ENCODE measurements at regions of chr20 and their contacts with region 1.

Region 1: DNA sequence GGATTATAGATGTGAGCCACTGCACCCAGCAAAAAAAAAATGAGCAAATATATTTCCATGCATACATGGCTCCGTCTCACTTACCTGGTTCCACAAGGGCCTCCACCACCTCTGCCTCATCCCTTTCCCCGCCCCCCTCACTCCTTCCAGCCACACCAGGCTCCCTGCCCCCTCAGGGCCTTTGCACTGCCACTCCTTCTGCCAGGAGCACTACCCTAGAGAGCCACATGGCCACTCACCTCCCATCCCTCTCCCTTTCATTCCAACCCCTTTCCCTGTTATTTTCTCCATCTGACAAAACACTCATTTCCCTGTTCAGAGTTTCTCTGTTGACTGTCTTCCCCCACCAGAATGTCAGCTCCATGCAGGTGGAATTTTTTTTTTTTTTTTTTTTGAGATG is 12.8 kb downstream of the SNAI1 start:
- DNase-seq: no peak
- H3K4me3 ChIP-seq: no peak overlapping the region
- H3K27ac ChIP-seq: no peak overlapping the region
- H3K27me3 ChIP-seq: no peaks in the 10 kb centered on the region
- CTCF ChIP-seq: no peak

Region 2: GRCh38 chr20:49424536-49424935 is 571.0 kb before region 1 on chr20:
- CTCF ChIA-PET with region 1: no interaction called
- POLR2A ChIA-PET with region 1: no interaction called
- DNase-seq: no peak
- H3K4me3 ChIP-seq: no peak overlapping the region
- H3K27ac ChIP-seq: no peak overlapping the region
- H3K27me3 ChIP-seq: peaks cover 39% of the 10 kb centered on the region
- CTCF ChIP-seq: no peak

Region 3: DNA sequence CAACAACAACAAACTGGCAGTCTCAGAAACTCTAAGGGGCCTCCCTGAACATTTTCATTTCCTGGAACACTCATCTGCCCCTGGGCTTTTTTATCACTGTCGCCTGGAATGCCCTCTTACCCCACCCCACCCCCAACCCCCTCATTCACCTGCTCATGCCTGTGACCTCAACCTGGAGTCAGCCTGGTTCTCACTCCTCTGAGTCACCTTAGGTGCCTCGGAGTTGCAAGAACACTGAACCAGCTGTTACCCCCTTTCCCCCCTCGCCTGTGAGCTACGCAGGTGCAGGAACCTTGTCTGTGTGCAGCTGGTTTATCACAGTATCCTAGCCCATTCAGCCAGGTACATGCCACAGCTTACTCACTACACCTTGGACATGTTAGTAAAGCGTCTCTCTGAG is 25.6 kb before region 1 on chr20:
- CTCF ChIA-PET with region 1: no interaction called
- POLR2A ChIA-PET with region 1: no interaction called
- DNase-seq: no peak
- H3K4me3 ChIP-seq: no peak overlapping the region
- H3K27ac ChIP-seq: no peak overlapping the region
- H3K27me3 ChIP-seq: no peaks in the 10 kb centered on the region
- CTCF ChIP-seq: no peak

Region 4: GRCh38 chr20:50027611-50028105 is 32.1 kb after region 1 on chr20:
- CTCF ChIA-PET with region 1: no interaction called
- POLR2A ChIA-PET with region 1: interaction called, 10 read pairs
- DNase-seq: peak; percentile 53
- H3K4me3 ChIP-seq: no peak overlapping the region
- H3K27ac ChIP-seq: no peak overlapping the region
- H3K27me3 ChIP-seq: no peaks in the 10 kb centered on the region
- CTCF ChIP-seq: no peak